ENCODE measurements at regions of chr11 and their contacts with region 1.

Region 1: GRCh38 chr11:47248664-47249377 is at the start of gene ACP2:
- DNase-seq: peak; percentile 81 to 87 (median 84)
- H3K4me3 ChIP-seq: peak within 1 kb of the TSS; percentile 76 to 97 (median 95)
- H3K4me3 Mint-ChIP-seq: peak within 1 kb of the TSS; percentile 95 to 100
- H3K27ac ChIP-seq: peak within 1 kb of the TSS; percentile 61 to 92
- H3K27ac Mint-ChIP-seq: peak within 1 kb of the TSS; percentile 92 to 99 (median 98)
- H3K4me1 ChIP-seq: peaks cover 20 to 25% of the 10 kb centered on the region in 2 donors
- H3K4me1 Mint-ChIP-seq: peaks cover 26% of the 10 kb centered on the region
- H3K27me3 ChIP-seq: no peaks in the 10 kb centered on the region
- H3K27me3 Mint-ChIP-seq: no peaks in the 10 kb centered on the region
- CTCF ChIP-seq: no peak
- polyA plus RNA-seq, gene ACP2: 13.1 to 25.3 (median 20.5) TPM

Region 2: DNA sequence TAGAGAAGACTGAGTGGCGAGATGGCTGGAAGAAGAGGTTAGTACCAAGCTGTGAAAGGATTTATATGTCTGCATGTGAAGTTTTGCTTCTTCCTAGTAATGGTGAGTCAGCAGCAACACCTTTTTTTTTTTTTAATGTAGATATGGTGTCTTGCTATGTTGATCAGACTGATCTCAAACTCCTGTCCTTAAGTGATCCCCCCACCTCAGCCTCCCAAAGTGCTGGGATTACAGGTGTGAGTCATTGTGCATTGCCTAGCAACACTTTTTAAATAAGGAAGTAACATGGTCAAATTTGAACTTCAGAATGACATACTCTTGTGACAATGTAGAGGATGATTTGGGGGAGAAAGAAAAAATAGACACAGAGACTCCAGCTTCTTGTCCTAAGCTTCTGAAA is 318.7 kb before region 1 on chr11:
- intact Hi-C with region 1: loop called (anchors 5 to 10 kb)
- DNase-seq: peak in 2 of 3 donors; percentile 14 to 48
- H3K4me3 ChIP-seq: no peak overlapping the region
- H3K4me3 Mint-ChIP-seq: no peak overlapping the region
- H3K27ac ChIP-seq: no peak overlapping the region
- H3K27ac Mint-ChIP-seq: no peak overlapping the region
- H3K4me1 ChIP-seq: no peaks in the 10 kb centered on the region
- H3K4me1 Mint-ChIP-seq: peaks cover 4% of the 10 kb centered on the region
- H3K27me3 ChIP-seq: no peaks in the 10 kb centered on the region
- H3K27me3 Mint-ChIP-seq: peaks cover 1 to 4% (median 3%) of the 10 kb centered on the region in 3 donors
- CTCF ChIP-seq: no peak

Region 3: GRCh38 chr11:46936138-46937110 is 312.4 kb before region 1 on chr11 and contains the start of gene CSTPP1:
- intact Hi-C with region 1: loop called (anchors 5 to 10 kb)
- DNase-seq: peak; percentile 81 to 90 (median 87)
- H3K4me3 ChIP-seq: peak within 1 kb of the TSS; percentile 44 to 85 (median 52)
- H3K4me3 Mint-ChIP-seq: peak within 1 kb of the TSS; percentile 91 to 97
- H3K27ac ChIP-seq: peak within 1 kb of the TSS in 1 of 2 donors; percentile 37
- H3K27ac Mint-ChIP-seq: peak within 1 kb of the TSS in 6 of 7 donors; percentile 70 to 91 (median 84)
- H3K4me1 ChIP-seq: peaks cover 10 to 12% of the 10 kb centered on the region in 2 donors
- H3K4me1 Mint-ChIP-seq: peaks cover 13% of the 10 kb centered on the region
- H3K27me3 ChIP-seq: no peaks in the 10 kb centered on the region
- H3K27me3 Mint-ChIP-seq: peaks cover 0 to 2% (median 2%) of the 10 kb centered on the region in 3 donors
- CTCF ChIP-seq: no peak
- polyA plus RNA-seq, gene CSTPP1: 4.5 to 6.5 (median 5.9) TPM

Region 4: DNA sequence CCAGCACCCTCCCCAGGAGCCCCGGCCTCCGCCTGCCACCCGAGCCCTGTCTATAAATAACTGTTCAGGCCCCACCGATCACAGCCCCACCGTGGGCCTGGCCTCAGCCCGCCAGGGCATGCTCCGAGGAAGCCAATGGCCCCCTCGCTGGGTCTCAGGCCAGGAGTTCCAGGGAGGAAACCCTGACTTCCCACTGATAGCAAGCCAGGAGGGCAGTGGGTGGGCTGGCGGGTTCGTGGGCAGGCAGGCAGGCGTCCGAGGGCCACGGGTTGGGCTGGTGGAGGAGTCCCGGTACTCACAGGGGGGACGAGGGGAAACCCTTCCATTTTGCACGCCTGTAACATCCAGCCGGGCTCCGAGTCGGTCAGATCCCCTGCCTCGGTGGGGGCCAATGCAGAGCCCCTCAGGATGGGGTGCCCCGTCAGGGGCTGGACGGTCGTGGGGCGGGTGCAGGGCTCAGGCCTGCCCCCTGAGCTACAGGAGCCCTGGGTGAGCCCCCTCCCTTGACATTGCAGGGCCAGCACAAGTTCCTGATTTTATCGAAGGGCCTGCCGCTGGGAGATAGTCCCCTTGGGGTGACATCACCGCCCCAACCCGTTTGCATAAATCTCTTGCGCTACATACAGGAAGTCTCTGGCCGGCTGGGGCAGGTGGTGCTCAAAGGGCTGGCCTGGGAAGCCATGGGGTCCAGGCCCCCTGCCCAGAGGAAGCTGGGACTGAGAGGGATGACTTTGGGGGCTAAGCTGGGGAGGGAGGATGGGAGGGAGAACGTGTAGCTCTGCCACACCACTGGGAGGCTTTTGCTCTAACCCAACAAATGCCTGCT is 129.4 kb after region 1 on chr11 and contains the start of gene SPI1:
- intact Hi-C with region 1: no loop called
- DNase-seq: peak; percentile 94 to 97 (median 97)
- H3K4me3 ChIP-seq: peak within 1 kb of the TSS; percentile 84 to 99 (median 97)
- H3K4me3 Mint-ChIP-seq: peak within 1 kb of the TSS; percentile 98 to 99
- H3K27ac ChIP-seq: peak within 1 kb of the TSS; percentile 96 to 97
- H3K27ac Mint-ChIP-seq: no peak within 1 kb of the TSS
- H3K4me1 ChIP-seq: peaks cover 49 to 77% of the 10 kb centered on the region in 2 donors
- H3K4me1 Mint-ChIP-seq: peaks cover 41% of the 10 kb centered on the region
- H3K27me3 ChIP-seq: no peaks in the 10 kb centered on the region
- H3K27me3 Mint-ChIP-seq: no peaks in the 10 kb centered on the region
- CTCF ChIP-seq: no peak
- polyA plus RNA-seq, gene SPI1: 156 to 914 (median 223) TPM

Measured in CD14-positive monocyte (primary cell).